ENCODE measurements at regions of chr2 and their contacts with region 1.

Region 1: GRCh38 chr2:181785691-181786344 is 105.5 kb upstream of the NEUROD1 start:
- DNase-seq: peak; percentile 90
- ATAC-seq: peak; percentile 93
- H3K4me3 ChIP-seq: peak overlapping the region; percentile 0; the same call in 1 of the 2 replicates
- H3K27ac ChIP-seq: peak overlapping the region; percentile 83
- H3K4me1 ChIP-seq: peaks cover 74% of the 10 kb centered on the region
- H3K27me3 ChIP-seq: no peaks in the 10 kb centered on the region
- CTCF ChIP-seq: no peak

Region 2: DNA sequence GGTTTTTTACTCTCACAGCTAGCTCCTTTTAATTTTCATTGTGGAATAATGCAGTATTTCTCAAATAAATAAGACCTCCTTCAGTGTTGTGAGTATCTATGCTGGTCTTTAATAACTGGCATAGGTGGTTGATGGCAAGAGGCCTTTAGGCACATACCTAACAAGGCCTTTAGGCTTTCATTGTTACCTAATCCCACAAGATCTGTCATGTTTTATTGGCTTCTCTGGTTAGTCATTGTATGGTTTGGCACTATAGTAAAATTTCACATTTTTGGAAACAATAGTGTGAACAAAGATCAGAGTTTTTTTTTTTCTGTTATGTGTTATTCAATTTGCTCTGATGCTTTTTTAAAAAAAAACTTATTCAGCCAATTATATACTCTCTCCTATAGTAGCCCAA is 15.7 kb before region 1 on chr2:
- CTCF ChIA-PET with region 1: no interaction called
- POLR2A ChIA-PET with region 1: no interaction called
- intact Hi-C with region 1: loop called (anchors 2 kb)
- DNase-seq: peak; percentile 92
- ATAC-seq: peak; percentile 88
- H3K4me3 ChIP-seq: no peak overlapping the region
- H3K27ac ChIP-seq: peak overlapping the region; percentile 26; the same call in 1 of the 2 replicates
- H3K4me1 ChIP-seq: peaks cover 30% of the 10 kb centered on the region
- H3K27me3 ChIP-seq: no peaks in the 10 kb centered on the region
- CTCF ChIP-seq: no peak

Region 3: GRCh38 chr2:181904022-181904632 is 118.3 kb after region 1 on chr2:
- CTCF ChIA-PET with region 1: no interaction called
- POLR2A ChIA-PET with region 1: no interaction called
- intact Hi-C with region 1: no loop called
- DNase-seq: peak; percentile 70
- ATAC-seq: 0 out of 2 replicates have a peak, but pooled peaks have one; percentile 43
- H3K4me3 ChIP-seq: no peak overlapping the region
- H3K27ac ChIP-seq: no peak overlapping the region
- H3K4me1 ChIP-seq: peaks cover 15% of the 10 kb centered on the region
- H3K27me3 ChIP-seq: no peaks in the 10 kb centered on the region
- CTCF ChIP-seq: peak; percentile 80